G401 (cell line): ENCODE measurements at regions of chr1 and their contacts with region 1.

Region 1: DNA sequence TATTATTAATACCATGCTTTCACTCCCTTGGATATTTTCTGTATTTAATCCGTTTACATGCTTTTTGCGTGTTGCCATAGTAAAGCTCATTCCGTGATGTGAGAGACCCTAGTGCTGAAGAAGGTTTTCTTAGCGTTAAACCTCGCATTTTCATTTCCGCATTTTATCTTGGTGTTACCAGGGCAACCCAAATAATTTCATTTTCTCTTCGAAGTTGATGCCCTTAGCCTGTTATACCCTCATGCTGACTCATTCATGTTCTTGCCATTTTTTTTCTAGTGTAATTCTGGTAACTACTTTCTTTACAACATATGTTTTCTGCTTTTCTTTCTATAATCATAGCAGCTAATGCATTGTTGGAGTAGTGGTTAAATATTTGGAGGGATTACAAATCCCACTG is 37.2 kb downstream of the LRRC8C start:
- DNase-seq: no peak

Region 2: GRCh38 chr1:89762779-89763648 is 92.9 kb after region 1 on chr1:
- in situ Hi-C with region 1: loop called (anchors 25 kb)
- DNase-seq: peak; percentile 72